HepG2 (cell line): ENCODE measurements at regions of chr19 and their contacts with region 1.

Region 1: DNA sequence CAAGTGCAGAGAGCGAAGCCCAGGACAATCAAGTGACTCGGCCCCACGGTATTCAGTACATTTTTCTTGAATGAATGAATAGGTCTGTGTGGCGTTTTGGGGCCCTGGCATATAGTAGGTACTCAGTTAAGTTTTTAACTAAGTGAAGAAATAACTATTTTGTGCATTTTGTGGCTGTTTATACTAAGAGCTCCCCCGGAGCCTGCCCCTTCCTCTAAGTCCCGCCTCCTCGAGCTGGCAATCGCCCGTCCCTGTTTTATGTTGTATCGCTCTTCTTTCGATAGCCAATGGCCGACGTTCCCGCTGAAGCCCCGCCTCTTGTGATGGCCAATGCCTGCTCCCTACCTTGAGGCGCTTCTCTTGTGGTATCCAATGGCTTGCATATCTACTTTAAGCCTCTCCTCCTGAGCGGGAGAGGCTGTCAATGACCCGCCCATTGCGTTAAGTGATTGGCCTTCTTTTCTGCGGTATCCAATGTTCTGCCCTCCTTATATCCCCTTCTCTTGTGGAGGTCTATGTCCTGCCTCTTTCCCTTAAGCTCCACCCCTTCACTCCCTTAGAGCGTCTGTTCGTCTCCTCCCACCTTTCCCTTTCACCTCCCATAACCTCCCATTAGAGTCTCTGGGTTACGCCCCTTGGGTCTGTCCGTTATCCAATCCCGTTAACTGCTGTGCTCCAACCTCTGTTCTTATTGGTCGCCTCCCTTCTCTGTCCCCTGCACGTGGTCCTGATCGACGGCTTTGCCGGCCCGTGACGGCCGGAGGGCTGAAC is 509 bp upstream of the HDGFL2 start:
- DNase-seq: peak; percentile 100
- ATAC-seq: peak; percentile 92
- H3K4me3 ChIP-seq: peak overlapping the region; percentile 59 to 72 (median 65)
- H3K27ac ChIP-seq: peak overlapping the region; percentile 88
- H3K4me1 ChIP-seq: peaks cover 21% of the 10 kb centered on the region
- H3K27me3 ChIP-seq: no peaks in the 10 kb centered on the region; a peak in 1 of 5 replicates
- CTCF ChIP-seq: no peak
- EP300 ChIP-seq: no peak
- POLR2A ChIP-seq: peak; percentile 52 to 54; a peak in 2 of 4 replicates
- RAD21 ChIP-seq: no peak

Region 2: GRCh38 chr19:4390567-4391305 is 80.9 kb before region 1 on chr19:
- CTCF ChIA-PET with region 1: no interaction called
- POLR2A ChIA-PET with region 1: no interaction called
- in situ Hi-C with region 1: no loop called
- intact Hi-C with region 1: no loop called
- DNase-seq: peak; percentile 91
- ATAC-seq: peak; percentile 83
- H3K4me3 ChIP-seq: peak overlapping the region; percentile 34 to 60 (median 40); a peak in 5 of 6 replicates
- H3K27ac ChIP-seq: peak overlapping the region; percentile 95
- H3K4me1 ChIP-seq: peaks cover 86% of the 10 kb centered on the region
- H3K27me3 ChIP-seq: no peaks in the 10 kb centered on the region
- CTCF ChIP-seq: no peak
- EP300 ChIP-seq: peak; percentile 66 to 70; a peak in 2 of 4 replicates
- POLR2A ChIP-seq: peak; percentile 39 to 70; a peak in 3 of 4 replicates
- RAD21 ChIP-seq: peak; percentile 50

Region 3: DNA sequence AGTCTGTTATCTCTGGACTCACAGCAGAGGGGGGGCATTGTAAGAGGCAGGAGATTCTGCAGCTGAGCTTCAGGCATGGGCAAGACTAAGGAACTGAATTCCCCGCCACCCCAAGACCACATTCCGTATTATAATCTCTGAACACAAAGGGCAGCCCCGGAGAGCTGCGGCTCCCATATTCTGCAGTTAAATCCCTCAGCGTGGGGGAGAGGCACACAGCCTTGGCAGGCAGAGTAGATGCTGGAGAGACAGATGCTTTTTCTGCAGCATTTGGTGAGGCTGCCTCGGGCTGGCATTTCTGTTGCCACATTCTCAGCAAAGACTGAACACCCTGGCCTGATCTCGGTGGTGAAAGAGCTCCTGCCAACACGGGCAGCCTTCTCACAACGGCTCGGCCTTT is 56.2 kb before region 1 on chr19:
- CTCF ChIA-PET with region 1: no interaction called
- POLR2A ChIA-PET with region 1: interaction called, 18 read pairs
- in situ Hi-C with region 1: no loop called
- intact Hi-C with region 1: no loop called
- DNase-seq: no peak
- ATAC-seq: peak; percentile 48; the same call in 2 of the 3 replicates
- H3K4me3 ChIP-seq: no peak overlapping the region
- H3K27ac ChIP-seq: peak overlapping the region; percentile 38
- H3K4me1 ChIP-seq: peaks cover 38% of the 10 kb centered on the region
- H3K27me3 ChIP-seq: no peaks in the 10 kb centered on the region
- CTCF ChIP-seq: no peak
- EP300 ChIP-seq: no peak
- POLR2A ChIP-seq: no peak
- RAD21 ChIP-seq: no peak

Region 4: DNA sequence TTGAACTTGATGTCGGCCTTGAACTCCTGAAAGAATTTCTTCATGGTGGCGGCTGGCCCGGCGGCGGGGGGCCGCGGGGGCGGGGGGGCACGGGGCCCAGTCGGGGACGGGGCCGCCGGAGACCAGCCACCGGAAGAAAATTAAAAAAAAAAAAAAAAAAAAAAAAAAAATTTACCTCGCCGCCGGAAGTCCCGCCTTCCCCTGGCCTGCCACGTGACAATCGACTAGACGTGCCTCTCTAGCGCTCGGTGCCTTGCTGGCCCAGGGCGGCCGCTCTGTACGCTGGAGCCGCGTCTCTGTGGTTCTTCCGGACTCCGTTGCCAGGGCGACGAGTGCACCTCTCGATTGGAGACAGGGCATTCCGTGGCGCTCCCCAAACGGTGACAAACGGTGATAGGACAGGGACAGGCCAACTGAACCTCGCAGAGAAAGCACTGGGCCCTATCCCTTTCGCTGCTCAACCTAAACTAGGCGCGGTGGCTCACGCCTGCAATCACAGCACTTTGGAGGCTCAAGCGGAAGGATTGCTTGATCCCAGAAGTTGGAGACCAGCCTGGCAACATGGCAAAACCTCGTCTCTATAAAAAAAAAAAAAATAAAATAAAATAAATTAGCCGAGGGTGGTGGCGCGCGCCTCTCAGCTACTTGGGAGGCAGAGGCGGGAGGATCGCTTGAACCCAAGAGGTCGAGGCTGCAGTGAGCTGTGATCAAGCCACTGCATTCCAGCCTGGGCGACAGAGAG is 13.8 kb before region 1 on chr19 and contains the start of gene UBXN6:
- CTCF ChIA-PET with region 1: no interaction called
- POLR2A ChIA-PET with region 1: interaction called, 37 read pairs
- in situ Hi-C with region 1: no loop called
- intact Hi-C with region 1: no loop called
- DNase-seq: peak; percentile 95
- ATAC-seq: peak; percentile 80
- H3K4me3 ChIP-seq: peak within 1 kb of the TSS; percentile 72 to 92 (median 85)
- H3K27ac ChIP-seq: peak within 1 kb of the TSS; percentile 74
- H3K4me1 ChIP-seq: peaks cover 16% of the 10 kb centered on the region
- H3K27me3 ChIP-seq: no peaks in the 10 kb centered on the region; a peak in 1 of 5 replicates
- CTCF ChIP-seq: 0 out of 2 replicates have a peak, but pooled peaks have one; percentile 16
- EP300 ChIP-seq: peak in 1 of 2 experiments; percentile 60; a peak in 1 of 4 replicates
- POLR2A ChIP-seq: no peak
- RAD21 ChIP-seq: no peak
- total RNA-seq, gene UBXN6: 33.6 and 35.5 TPM in 2 replicates

Region 5: DNA sequence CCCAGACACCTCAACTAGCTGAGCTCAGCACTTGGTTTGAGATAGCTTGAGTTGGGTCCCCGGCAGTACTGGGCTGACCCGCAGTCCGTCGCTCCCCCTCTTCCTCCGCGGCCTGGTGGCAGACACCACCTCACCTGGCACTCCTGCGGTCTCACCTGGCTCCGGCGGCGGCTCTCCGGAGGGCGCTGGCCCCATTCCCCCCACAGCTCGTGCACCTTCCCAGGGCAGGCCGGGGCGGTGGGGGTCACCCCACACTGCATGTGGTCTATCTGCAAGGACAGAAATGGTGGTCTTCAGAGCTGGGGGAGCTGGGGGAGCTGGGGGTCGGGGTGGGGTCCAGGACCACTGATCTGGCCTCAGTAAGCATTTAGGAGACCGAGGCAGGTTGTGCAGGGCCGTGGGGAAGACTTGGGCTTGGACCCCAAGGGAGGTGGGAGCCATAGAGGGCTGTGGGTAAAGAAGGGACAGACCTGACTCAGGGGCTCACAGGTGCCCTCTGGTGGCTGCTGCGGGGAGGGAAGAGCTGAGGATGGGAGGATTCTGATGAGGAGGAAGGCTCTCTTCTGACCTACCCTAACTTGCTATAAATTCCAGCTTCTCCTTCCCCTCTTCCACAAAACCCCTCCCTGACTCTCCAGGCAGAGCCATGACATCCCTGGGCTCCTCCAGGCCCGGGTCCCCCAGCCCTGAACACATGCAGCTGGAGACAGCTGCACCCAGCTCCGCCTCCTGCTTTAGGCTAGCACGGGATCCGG is 53.4 kb after region 1 on chr19:
- CTCF ChIA-PET with region 1: no interaction called
- POLR2A ChIA-PET with region 1: interaction called, 15 read pairs
- in situ Hi-C with region 1: no loop called
- intact Hi-C with region 1: no loop called
- DNase-seq: no peak
- ATAC-seq: peak; percentile 50
- H3K4me3 ChIP-seq: no peak overlapping the region
- H3K27ac ChIP-seq: no peak overlapping the region
- H3K4me1 ChIP-seq: peaks cover 39% of the 10 kb centered on the region
- H3K27me3 ChIP-seq: no peaks in the 10 kb centered on the region; a peak in 1 of 5 replicates
- CTCF ChIP-seq: peak; percentile 73
- EP300 ChIP-seq: no peak
- POLR2A ChIP-seq: no peak
- RAD21 ChIP-seq: no peak

Region 6: GRCh38 chr19:4534836-4535658 is 63.5 kb after region 1 on chr19 and contains the start of gene PLIN5:
- CTCF ChIA-PET with region 1: no interaction called
- POLR2A ChIA-PET with region 1: interaction called, 10 read pairs
- in situ Hi-C with region 1: no loop called
- intact Hi-C with region 1: loop called (anchors 5 kb)
- DNase-seq: peak; percentile 80
- ATAC-seq: peak; percentile 61
- H3K4me3 ChIP-seq: peak within 1 kb of the TSS; percentile 37 to 71 (median 52); a peak in 5 of 6 replicates
- H3K27ac ChIP-seq: peak within 1 kb of the TSS; percentile 38
- H3K4me1 ChIP-seq: peaks cover 78% of the 10 kb centered on the region
- H3K27me3 ChIP-seq: no peaks in the 10 kb centered on the region; a peak in 1 of 5 replicates
- CTCF ChIP-seq: peak; percentile 32
- EP300 ChIP-seq: no peak
- POLR2A ChIP-seq: peak; percentile 63 to 81
- RAD21 ChIP-seq: peak; percentile 33; the same call in 1 of the 2 replicates
- total RNA-seq, gene PLIN5: 1.6 and 1.8 TPM in 2 replicates